ENCODE measurements at regions of chr4 and their contacts with region 1.

Region 1: GRCh38 chr4:185640811-185641675 is 105.7 kb upstream of the PDLIM3 start:
- DNase-seq: no peak
- H3K4me3 ChIP-seq: no peak overlapping the region
- H3K27ac ChIP-seq: peak overlapping the region; percentile 3
- H3K4me1 ChIP-seq: peaks cover 9% of the 10 kb centered on the region
- H3K27me3 ChIP-seq: no peaks in the 10 kb centered on the region
- CTCF ChIP-seq: peak; percentile 59

Region 2: DNA sequence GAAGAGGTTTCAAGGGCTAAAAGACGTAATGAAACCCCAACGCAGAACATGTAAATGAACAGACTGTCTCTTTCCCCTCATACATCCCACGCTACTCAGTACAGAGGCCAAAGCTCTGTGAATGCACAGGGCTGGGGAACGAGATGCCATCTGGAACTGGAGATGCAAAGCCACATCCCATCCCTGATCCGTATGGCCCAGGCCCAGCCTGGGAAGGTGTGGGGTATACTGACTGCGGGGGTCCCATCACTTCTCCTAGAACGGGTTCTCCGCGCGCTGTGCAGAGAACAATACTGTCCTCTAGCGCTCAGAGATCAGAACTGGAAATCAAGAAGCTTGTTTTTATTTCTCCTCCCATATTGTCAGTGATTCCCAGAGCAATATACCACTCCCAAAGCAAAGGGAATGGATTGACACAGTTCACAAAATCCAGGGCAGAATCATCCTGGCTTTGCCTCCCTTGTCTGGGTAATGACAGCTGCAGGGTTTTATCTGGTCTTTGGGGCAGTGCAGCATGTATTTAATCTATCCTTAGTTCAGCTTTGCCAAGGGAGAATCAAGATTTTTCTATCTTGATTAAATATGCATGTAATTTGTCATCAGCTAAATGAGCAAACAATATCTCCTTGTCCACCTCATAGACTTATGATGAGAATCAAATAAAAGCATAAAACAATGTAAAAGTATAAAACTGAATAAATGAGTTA is 380.6 kb after region 1 on chr4:
- intact Hi-C with region 1: loop called (anchors 5 kb)
- DNase-seq: no peak
- H3K4me3 ChIP-seq: peak overlapping the region; percentile 51
- H3K27ac ChIP-seq: peak overlapping the region; percentile 47
- H3K4me1 ChIP-seq: peaks cover 17% of the 10 kb centered on the region
- H3K27me3 ChIP-seq: no peaks in the 10 kb centered on the region
- CTCF ChIP-seq: peak; percentile 92

Region 3: GRCh38 chr4:186037692-186038658 is 396.9 kb after region 1 on chr4:
- intact Hi-C with region 1: loop called (anchors 5 kb)
- DNase-seq: no peak
- H3K4me3 ChIP-seq: no peak overlapping the region
- H3K27ac ChIP-seq: peak overlapping the region; percentile 14
- H3K4me1 ChIP-seq: peaks cover 21% of the 10 kb centered on the region
- H3K27me3 ChIP-seq: no peaks in the 10 kb centered on the region
- CTCF ChIP-seq: peak; percentile 86